OCI-LY7 (cell line): ENCODE measurements at regions of chr1 and their contacts with region 1.

Region 1: DNA sequence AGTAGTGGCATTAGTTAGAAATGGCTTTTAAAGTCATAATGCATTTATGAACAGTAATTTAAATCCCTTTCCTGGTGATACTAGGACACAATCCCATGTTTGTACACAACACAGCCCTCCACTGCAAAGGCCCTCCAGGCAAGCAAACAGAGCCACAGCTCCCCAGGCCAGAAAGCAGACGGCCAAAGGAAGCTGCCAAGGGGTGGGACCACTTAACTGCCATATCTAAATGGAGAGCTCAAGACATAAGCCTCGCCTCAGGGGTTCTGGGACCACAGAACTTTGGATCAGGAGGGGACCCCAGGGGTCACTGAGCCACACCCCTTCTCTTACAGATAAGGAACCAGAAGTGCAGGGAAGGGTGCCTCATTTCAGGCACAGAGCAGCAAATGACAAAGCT is 189.7 kb downstream of the KCNH1 start:
- DNase-seq: no peak
- H3K4me3 ChIP-seq: no peak overlapping the region
- H3K27ac ChIP-seq: no peak overlapping the region
- H3K4me1 ChIP-seq: peaks cover 5% of the 10 kb centered on the region
- CTCF ChIP-seq: no peak

Region 2: DNA sequence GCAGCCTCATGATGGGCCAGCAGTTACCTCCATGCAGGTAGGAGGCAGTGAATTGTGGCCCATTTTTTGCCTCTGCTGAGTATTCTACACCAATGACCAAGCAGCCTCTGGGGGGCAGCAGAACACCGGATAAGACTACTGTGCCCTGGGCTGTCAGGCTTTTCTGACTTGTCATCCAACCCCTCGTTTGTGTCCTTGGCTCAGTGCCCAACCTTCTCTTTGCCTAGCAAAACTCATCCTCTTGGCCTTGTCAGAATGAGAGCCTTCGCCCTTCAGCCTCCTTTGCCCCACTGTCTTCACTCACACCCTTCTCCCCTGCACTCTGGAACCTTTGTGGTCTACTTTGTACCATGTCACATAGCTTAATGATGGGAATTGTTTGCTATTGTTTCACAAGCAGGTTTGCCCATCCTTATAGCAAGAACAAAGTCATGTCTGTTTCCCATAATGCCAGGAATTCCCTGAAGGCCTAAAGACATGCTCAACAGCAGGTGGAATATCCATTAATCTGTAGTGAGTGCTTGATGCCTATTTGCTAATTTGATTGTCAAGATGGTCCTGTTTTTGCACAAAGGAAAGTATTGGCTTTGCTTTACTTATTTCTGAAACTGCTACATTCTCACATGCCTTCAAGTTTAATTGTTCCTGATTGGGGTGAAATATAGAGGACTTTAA is 359.7 kb before region 1 on chr1:
- CTCF ChIA-PET with region 1: no interaction called
- POLR2A ChIA-PET with region 1: no interaction called
- intact Hi-C with region 1: loop called (anchors 10 kb)
- DNase-seq: peak; percentile 53
- H3K4me3 ChIP-seq: no peak overlapping the region
- H3K27ac ChIP-seq: no peak overlapping the region
- H3K4me1 ChIP-seq: no peaks in the 10 kb centered on the region
- CTCF ChIP-seq: peak; percentile 79